MCF 10A (cell line): ENCODE measurements at regions of chr12 and their contacts with region 1.

Region 1: DNA sequence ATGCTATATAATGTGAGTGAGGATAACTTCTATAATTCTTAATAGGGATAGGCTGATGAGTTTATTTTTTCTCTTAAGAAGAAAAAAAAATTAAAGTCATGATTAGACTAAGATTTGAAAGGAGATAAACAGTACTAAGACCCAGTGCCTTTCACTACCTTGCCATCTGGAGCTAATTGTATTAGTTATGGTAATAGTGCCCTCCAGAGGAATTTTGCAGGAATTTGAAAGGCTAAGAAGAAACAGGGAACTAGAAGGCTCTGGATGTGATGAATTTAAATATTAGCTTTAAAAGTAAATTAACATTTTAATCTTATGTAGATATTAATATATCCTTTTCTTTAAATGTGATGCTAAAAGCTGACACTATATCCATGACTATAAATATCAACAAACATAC is 36.6 kb upstream of the PIK3C2G start:
- DNase-seq: peak; percentile 65
- H3K4me3 Mint-ChIP-seq: no peak overlapping the region
- H3K27ac Mint-ChIP-seq: no peak overlapping the region
- H3K4me1 Mint-ChIP-seq: no peaks in the 10 kb centered on the region
- H3K27me3 Mint-ChIP-seq: no peaks in the 10 kb centered on the region
- CTCF ChIP-seq: peak; percentile 50

Region 2: DNA sequence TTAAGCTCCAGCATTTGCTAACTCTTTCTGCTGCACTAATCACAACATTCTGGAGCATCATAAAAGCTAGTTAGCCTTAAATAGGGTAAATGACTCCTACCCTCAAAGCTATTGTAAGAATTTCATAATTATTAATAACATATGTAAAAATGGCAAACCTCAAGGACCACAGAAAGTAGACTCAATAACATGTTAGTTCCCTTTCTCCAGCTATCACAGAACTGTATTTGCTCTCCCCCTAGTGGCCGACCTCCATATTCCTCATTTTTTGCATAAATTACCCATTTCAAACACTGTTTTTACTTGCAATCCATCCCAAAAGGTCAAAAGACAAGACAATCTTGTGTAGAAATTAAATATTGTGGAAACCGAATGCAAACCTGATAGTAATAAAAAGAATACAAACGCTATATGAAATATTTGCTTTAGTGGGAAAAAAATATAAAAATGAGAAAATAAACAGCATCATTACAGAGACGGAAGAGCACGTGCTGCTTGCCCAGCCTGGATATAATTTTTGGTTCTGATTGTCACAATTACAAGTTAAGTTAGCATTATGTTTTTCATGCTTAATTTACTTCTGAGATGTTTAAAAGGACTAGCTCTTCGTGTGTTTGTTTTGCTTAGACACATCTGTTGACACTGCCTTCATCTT is 232.6 kb before region 1 on chr12:
- CTCF ChIA-PET with region 1: interaction called, 3 read pairs
- POLR2A ChIA-PET with region 1: no interaction called
- intact Hi-C with region 1: loop called (anchors 5 kb)
- DNase-seq: peak; percentile 56
- H3K4me3 Mint-ChIP-seq: no peak overlapping the region
- H3K27ac Mint-ChIP-seq: no peak overlapping the region
- H3K4me1 Mint-ChIP-seq: no peaks in the 10 kb centered on the region
- H3K27me3 Mint-ChIP-seq: peaks cover 55% of the 10 kb centered on the region
- CTCF ChIP-seq: peak; percentile 61

Region 3: GRCh38 chr12:18054925-18055324 is 169.8 kb before region 1 on chr12:
- CTCF ChIA-PET with region 1: no interaction called
- POLR2A ChIA-PET with region 1: no interaction called
- intact Hi-C with region 1: no loop called
- DNase-seq: no peak
- H3K4me3 Mint-ChIP-seq: no peak overlapping the region
- H3K27ac Mint-ChIP-seq: no peak overlapping the region
- H3K4me1 Mint-ChIP-seq: no peaks in the 10 kb centered on the region
- H3K27me3 Mint-ChIP-seq: peaks cover 30% of the 10 kb centered on the region
- CTCF ChIP-seq: no peak

Region 4: GRCh38 chr12:18079541-18080246 is 145.1 kb before region 1 on chr12:
- CTCF ChIA-PET with region 1: interaction called, 3 read pairs
- POLR2A ChIA-PET with region 1: no interaction called
- intact Hi-C with region 1: loop called (anchors 5 kb)
- DNase-seq: no peak
- H3K4me3 Mint-ChIP-seq: no peak overlapping the region
- H3K27ac Mint-ChIP-seq: no peak overlapping the region
- H3K4me1 Mint-ChIP-seq: no peaks in the 10 kb centered on the region
- H3K27me3 Mint-ChIP-seq: peaks cover 35% of the 10 kb centered on the region
- CTCF ChIP-seq: no peak

Region 5: GRCh38 chr12:18139989-18140596 is 84.7 kb before region 1 on chr12:
- CTCF ChIA-PET with region 1: interaction called, 44 read pairs
- POLR2A ChIA-PET with region 1: interaction called, 11 read pairs
- intact Hi-C with region 1: loop called (anchors 1 kb)
- DNase-seq: peak; percentile 45
- H3K4me3 Mint-ChIP-seq: no peak overlapping the region
- H3K27ac Mint-ChIP-seq: no peak overlapping the region
- H3K4me1 Mint-ChIP-seq: peaks cover 17% of the 10 kb centered on the region
- H3K27me3 Mint-ChIP-seq: no peaks in the 10 kb centered on the region
- CTCF ChIP-seq: peak; percentile 69